Aorta (tissue), 5 donors: ENCODE measurements at regions of chr11 and their contacts with region 1.

Region 1: DNA sequence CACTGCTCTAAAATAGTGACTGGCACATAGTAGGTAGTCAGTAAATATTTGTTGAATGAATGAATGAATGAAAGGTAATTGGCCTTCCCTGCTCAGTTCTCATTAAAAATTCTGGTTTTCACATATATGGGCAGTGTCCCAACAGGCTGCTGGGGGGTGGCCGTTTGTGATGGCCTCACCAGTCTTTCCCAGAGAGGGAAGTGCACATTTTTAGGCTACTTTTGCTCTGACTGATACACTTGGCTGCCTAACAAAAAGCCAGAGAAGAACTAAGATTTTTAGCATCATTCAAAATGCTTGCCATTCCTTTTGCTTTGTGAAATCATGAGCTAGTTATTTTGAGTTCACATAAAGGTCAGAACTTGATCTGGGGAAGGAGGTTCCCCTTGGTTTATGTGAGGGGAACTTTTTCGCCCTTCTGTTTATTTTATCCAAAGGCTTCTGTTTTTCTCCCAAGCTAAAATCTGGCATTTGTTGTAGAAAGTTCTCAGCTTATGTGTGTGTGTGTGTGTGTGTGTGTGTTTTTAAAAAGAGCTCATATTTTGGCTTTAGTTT is 83.1 kb downstream of the PTPRJ start:
- DNase-seq: peak in 1 of 2 donors; percentile 58
- ATAC-seq: peak; percentile 80
- H3K4me3 ChIP-seq: no peak overlapping the region
- H3K27ac ChIP-seq: no peak overlapping the region
- H3K4me1 ChIP-seq: no peaks in the 10 kb centered on the region
- H3K27me3 ChIP-seq: no peaks in the 10 kb centered on the region

Region 2: DNA sequence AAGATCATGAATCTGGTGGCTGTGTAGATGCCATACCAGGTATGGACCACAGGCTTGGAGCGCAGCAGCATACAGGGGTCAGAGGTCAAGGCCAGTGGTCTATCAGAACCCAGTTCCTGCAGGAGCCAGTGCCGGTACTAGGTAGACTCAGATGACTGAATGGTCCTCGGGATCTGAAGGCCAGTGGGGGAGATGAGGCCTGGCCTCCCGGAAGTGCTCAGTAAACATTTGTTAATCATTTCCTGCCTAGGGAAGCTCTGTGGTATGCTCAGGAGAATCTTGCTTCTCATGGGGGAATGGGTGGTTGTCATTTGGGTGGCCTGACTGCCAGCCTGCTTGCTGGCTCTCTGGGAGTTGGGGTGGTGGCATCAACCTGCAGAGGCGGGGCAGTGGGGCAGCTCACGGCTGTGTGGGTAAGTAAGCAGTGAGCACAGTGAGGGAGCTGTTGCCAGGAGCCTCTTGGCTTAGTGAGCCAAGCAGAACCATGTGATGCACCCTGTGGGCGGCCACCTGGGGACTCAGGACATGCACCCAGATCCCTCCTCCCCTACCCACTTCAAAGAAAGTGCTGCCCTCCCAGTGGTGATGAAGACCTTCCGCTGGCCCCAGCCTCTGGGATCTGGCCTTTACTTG is 50.1 kb before region 1 on chr11:
- intact Hi-C with region 1: loop called in 1 of 2 experiments (anchors 10 kb)
- DNase-seq: no peak
- ATAC-seq: peak; percentile 34
- H3K4me3 ChIP-seq: no peak overlapping the region
- H3K27ac ChIP-seq: no peak overlapping the region
- H3K4me1 ChIP-seq: no peaks in the 10 kb centered on the region
- H3K27me3 ChIP-seq: no peaks in the 10 kb centered on the region

Region 3: GRCh38 chr11:48025958-48026340 is 37.6 kb before region 1 on chr11:
- intact Hi-C with region 1: no loop called
- DNase-seq: no peak
- ATAC-seq: peak; percentile 40
- H3K4me3 ChIP-seq: no peak overlapping the region
- H3K27ac ChIP-seq: no peak overlapping the region
- H3K4me1 ChIP-seq: no peaks in the 10 kb centered on the region
- H3K27me3 ChIP-seq: no peaks in the 10 kb centered on the region

Region 4: DNA sequence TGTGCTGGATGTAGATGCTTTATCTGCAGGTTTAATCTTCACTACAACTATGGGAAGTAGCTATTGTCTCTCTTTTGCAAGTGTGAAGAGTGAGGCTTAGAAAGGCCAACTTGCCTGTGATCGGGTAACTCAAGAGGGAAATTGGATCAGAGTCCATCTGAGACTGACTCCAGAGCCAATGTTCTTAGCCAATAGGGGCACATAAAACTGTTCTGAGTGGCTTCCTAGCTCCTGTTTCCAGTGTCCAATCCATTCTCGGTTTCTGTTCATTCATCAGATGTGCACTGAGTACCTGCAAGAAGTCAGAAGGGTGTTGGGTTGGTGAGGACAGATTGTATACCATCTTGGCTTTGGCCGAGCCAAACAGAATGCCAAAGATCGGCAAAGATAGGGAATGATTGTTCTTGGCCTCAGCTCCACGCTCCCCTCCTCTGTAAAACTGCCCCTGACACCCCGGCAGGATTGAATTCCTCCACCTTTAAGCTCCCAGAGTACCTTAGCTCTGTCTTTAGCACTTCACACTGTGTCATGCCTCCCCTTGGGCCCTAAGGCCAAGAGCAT is 16.9 kb after region 1 on chr11:
- intact Hi-C with region 1: loop called in 1 of 2 experiments (anchors 1 kb)
- DNase-seq: no peak
- ATAC-seq: no peak
- H3K4me3 ChIP-seq: no peak overlapping the region
- H3K27ac ChIP-seq: peak overlapping the region in 1 of 2 donors; percentile 23
- H3K4me1 ChIP-seq: peaks cover 0 to 3% of the 10 kb centered on the region in 2 donors
- H3K27me3 ChIP-seq: no peaks in the 10 kb centered on the region

Region 5: DNA sequence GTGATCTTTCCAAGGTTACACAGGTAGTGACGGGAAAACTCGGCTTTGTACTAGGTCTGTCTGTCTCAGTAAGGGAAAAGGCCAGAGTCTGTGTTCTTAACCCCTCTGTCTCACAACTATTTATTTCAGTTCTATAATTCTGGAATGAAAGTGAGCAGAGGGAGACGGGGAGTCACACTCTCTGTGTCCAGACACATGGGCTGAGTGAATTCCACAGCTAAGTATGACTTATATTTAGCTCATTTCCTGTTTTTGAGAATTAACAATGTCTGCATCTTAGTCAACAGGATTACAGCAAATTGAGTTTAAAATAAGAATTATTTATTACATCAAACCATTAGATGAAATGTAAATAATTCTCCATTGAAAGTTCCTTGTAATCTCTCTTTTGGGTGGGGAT is 90.7 kb after region 1 on chr11:
- intact Hi-C with region 1: no loop called
- DNase-seq: no peak
- ATAC-seq: no peak
- H3K4me3 ChIP-seq: no peak overlapping the region
- H3K27ac ChIP-seq: no peak overlapping the region
- H3K4me1 ChIP-seq: no peaks in the 10 kb centered on the region
- H3K27me3 ChIP-seq: no peaks in the 10 kb centered on the region

Region 6: DNA sequence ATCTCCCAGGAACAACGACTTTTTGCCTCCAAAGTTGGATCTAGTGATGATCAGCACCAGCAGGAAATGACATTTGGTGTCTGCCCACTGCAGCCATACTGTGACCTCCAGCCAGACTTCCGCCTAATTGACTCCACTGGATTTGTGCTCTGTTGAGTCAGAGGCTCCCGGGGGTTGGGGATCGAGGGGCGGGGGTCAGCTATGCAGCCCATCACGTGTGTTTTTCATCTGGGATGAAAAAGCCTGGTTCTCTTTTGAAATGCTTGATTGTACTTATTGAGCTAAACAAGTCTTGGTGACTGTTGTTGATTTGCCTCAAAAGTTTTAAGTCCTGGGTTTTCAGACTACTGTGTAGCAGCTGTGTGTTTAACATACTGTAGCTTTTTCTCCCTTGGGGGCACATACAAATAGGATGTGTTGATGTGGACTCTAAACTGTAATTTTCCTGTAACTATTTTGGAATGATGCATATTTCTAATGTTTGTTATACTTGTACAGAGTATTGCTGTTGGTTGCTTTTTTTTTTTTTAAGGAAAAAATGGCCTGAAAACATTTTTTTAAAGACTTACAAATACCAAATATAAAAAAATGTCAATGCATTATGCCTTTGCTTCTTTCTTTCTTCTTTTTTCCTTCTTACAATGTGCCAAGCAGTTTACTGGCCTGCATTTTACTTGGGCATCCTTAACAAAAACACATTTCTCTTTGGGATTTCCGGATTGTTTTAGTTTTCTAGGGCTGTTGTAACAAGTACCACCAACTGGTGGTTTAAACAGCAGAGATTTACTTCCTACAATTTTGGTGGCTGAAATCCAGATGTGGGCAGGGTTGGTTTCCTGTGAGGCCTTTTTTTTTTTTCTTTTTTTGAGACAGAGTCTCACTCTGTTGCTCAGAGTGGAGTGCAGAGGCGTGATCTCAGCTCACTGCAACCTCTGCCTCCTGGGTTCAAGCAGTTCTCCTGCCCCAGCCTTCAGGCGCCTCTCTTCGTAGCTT is 107.0 kb after region 1 on chr11:
- intact Hi-C with region 1: no loop called
- DNase-seq: peak in 1 of 2 donors; percentile 50
- ATAC-seq: peak; percentile 49
- H3K4me3 ChIP-seq: no peak overlapping the region
- H3K27ac ChIP-seq: no peak overlapping the region
- H3K4me1 ChIP-seq: no peaks in the 10 kb centered on the region
- H3K27me3 ChIP-seq: no peaks in the 10 kb centered on the region